Calu3 (cell line): ENCODE measurements at regions of chr17 and their contacts with region 1.

Region 1: DNA sequence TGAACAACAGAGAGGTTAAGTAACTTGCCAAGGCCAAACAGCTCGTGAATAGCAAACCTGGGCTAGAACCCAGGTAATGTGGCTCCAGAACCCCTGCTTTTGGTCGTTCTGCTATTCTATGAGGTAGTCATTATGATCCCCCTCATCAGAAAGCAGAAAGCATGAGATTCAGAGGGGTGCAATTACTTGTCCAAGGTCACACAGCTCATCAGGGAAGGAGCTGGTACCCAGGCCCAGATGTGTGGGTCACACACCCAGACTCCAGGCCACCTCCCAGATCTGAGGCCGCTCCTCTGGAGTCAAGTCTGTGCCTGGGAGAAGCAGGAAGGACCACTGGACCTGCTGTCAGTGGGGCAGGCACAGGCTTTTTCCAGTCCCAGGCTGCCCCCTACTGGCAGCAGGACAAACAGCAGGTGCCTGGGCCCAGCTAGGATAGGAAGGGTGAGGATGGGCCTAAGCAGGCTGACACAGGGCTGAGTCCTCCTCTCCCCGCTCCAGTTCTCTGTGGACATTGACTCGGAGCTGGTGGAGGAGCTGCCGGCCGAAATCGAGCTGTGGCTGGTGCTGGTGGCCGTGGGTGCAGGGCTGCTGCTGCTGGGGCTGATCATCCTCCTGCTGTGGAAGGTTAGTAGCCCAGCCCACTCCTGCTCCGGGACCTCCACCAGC is 7.8 kb upstream of the PDK2 start:
- DNase-seq: peak; percentile 91
- H3K4me3 Mint-ChIP-seq: no peak overlapping the region
- H3K27ac Mint-ChIP-seq: peak overlapping the region; percentile 65
- H3K4me1 Mint-ChIP-seq: no peaks in the 10 kb centered on the region
- H3K27me3 Mint-ChIP-seq: no peaks in the 10 kb centered on the region
- CTCF ChIP-seq: peak; percentile 98

Region 2: DNA sequence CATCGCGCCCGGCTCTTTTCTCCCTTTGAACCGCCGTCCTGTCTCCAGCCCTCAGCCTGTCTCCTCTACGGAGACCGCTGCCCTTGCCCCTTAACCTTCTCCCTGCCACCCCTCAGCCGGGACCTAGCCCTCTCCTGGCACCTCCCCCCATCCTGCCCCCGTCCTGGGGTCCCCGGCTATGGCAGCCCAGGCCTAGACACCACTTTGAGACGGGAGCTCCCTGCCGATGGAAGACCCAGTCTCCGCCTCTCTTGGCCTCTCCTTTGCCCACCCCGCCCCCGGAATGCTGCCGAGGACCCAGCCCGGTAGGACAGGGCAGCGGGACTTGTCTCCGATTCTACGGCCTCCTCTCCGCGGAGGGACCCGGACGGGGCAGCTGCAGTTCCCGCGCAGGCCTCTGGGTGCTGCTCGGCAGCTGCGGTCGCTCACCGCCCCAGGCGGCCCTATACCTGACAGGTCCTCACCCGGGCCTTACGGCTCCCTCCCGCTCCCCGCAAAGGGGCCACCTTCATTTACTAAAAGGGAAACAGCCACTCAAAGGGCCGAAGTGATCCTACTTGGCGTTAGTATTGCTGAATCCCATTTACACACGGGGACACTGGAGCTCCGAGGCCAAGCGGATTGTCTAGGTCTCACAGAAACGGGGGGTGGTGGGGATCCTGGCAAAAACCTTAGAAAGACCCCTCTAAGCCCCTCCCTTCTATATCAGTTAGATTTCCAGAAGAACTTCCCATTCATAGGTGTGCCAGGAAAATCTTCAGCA is 206.9 kb before region 1 on chr17:
- CTCF ChIA-PET with region 1: no interaction called
- intact Hi-C with region 1: loop called (anchors 10 kb)
- DNase-seq: peak; percentile 95
- H3K4me3 Mint-ChIP-seq: peak overlapping the region; percentile 31
- H3K27ac Mint-ChIP-seq: no peak overlapping the region
- H3K4me1 Mint-ChIP-seq: peaks cover 9% of the 10 kb centered on the region
- H3K27me3 Mint-ChIP-seq: peaks cover 52% of the 10 kb centered on the region
- CTCF ChIP-seq: peak; percentile 99

Region 3: DNA sequence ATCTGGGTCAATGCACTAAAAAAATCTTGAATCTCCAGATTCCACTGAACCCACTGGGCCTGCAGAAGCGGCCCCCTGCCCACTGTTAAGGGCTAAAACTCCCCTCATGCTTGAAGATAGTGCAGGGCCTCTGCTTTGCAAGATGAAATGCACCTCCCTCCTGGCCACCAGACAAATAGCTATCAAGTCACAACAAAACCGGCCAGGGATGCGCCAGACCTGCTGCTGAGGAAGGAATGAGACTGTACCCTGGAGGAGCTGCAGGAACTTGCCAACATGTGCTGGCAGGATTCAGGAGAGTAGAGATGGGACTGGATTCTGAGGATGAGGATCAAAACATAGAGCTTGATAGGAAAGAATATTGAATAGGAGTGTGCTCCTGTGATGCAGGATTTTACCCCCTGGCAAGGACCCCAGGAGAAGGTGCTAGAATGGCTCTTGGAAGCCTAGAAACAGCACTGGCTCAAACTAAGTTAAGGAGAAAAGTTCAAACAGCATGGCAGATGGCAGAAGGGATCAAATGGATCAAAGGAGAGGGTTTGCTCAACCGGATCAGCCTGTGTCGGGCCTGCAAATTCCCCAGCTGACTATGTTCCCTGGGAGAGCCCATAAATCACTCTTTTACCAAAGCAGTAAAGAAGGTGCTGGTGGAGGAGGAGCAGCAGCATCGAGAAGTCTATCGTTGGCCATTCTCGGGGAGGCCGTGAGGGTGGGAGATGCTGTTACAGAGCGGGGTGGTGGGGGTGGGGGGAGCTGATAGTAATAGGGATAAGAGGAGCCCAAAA is 231.3 kb after region 1 on chr17:
- CTCF ChIA-PET with region 1: no interaction called
- intact Hi-C with region 1: no loop called
- DNase-seq: no peak
- H3K4me3 Mint-ChIP-seq: no peak overlapping the region
- H3K27ac Mint-ChIP-seq: no peak overlapping the region
- H3K4me1 Mint-ChIP-seq: no peaks in the 10 kb centered on the region
- H3K27me3 Mint-ChIP-seq: peaks cover 16% of the 10 kb centered on the region
- CTCF ChIP-seq: no peak

Region 4: DNA sequence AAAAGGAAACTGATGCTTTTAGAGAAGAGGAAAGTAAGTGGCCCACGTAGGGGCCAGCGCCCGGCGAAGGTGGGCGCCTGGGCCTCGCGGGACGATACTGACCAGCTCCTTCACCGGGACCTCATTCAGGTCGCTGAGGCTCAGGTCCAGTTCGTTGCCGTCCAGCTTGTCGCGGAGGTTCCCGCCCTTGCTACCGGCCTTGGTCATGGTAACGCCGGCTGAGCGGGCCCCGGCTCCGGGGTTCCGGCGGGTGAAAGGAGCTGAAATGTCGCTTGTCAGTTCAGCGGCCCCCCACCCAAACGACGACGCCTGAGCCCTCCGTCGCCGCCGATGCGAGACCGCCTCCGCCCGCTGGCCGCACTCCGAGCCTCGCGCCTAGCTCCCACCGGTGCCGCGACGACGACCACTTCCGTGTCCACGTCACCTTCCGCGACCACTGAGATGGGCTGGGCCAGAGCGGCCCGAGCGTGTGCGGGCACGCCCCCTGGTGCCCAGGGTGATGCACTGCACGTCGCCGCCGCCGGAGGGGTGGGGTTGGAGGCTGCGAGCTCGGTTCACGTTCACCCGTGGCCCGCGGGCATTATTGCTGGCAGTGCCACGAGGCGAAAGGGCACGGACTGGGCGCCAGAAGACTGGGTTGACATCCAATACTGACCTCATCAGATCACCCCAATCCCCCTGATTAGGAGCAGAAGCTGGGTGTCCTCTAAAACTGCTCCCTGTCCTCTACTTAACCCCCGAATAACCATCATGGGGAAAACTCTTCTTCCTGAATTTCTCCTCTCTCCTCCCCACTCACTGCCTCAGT is 309.9 kb after region 1 on chr17 and contains the start of gene LRRC59:
- CTCF ChIA-PET with region 1: no interaction called
- intact Hi-C with region 1: no loop called
- DNase-seq: peak; percentile 98
- H3K4me3 Mint-ChIP-seq: peak within 1 kb of the TSS; percentile 87
- H3K27ac Mint-ChIP-seq: peak within 1 kb of the TSS; percentile 86
- H3K4me1 Mint-ChIP-seq: peaks cover 47% of the 10 kb centered on the region
- H3K27me3 Mint-ChIP-seq: no peaks in the 10 kb centered on the region
- CTCF ChIP-seq: peak; percentile 100
- total RNA-seq, gene LRRC59: 205 and 212 TPM in 2 replicates